ENCODE measurements at regions of chr7 and their contacts with region 1.

Region 1: DNA sequence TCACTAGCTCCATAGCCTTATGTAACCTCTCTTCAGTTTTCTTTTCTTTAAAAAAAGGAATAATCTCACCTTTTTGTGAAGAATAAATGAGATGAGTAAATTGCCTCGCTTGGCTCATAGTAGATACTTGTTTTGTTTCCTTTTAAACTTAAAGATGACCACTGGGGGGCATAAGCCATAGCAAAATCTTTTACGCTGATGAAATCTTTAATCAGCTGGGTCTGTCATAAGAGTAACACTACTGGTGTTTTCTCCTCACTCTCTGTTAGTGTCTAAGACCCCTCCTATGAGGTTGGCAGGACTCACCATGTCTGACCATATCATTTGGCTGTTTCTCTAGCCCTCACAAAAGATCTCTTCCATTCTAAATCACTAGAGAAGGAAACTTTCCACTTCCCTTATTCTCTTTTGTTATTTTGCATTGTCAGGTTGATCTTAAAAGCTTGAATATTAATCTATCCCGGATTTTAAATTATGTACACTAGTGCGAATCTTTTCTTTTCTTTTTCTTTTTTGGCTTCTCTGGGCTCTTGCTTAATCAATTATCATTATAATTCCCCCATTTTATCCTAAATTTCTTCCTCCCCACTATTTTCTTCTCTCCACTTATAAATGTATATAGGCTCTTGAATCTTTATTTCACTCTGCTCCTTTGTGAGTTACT is 12.5 kb downstream of the STAG3 start:
- DNase-seq: peak in 2 of 9 experiments; percentile 70 to 79
- ATAC-seq: peak; percentile 95
- H3K4me3 ChIP-seq: no peak overlapping the region
- H3K4me3 Mint-ChIP-seq: no peak overlapping the region
- H3K27ac ChIP-seq: no peak overlapping the region
- H3K27ac Mint-ChIP-seq: no peak overlapping the region
- H3K4me1 ChIP-seq: peaks cover 23% of the 10 kb centered on the region
- H3K4me1 Mint-ChIP-seq: peaks cover 36% of the 10 kb centered on the region
- H3K27me3 ChIP-seq: no peaks in the 10 kb centered on the region
- H3K27me3 Mint-ChIP-seq: no peaks in the 10 kb centered on the region
- CTCF ChIP-seq: peak; percentile 56

Region 2: GRCh38 chr7:100171087-100171681 is 19.0 kb before region 1 on chr7:
- CTCF ChIA-PET with region 1: interaction called, 25 read pairs
- POLR2A ChIA-PET with region 1: interaction called, 5 read pairs
- intact Hi-C with region 1: no loop called
- DNase-seq: peak in 6 of 9 experiments; percentile 38 to 69 (median 59)
- ATAC-seq: peak; percentile 44
- H3K4me3 ChIP-seq: peak overlapping the region; percentile 42 to 54
- H3K4me3 Mint-ChIP-seq: peak overlapping the region; percentile 82
- H3K27ac ChIP-seq: no peak overlapping the region
- H3K27ac Mint-ChIP-seq: peak overlapping the region; percentile 88
- H3K4me1 ChIP-seq: peaks cover 56% of the 10 kb centered on the region
- H3K4me1 Mint-ChIP-seq: peaks cover 67% of the 10 kb centered on the region
- H3K27me3 ChIP-seq: peaks cover 0 to 23% of the 10 kb centered on the region in 2 experiments
- H3K27me3 Mint-ChIP-seq: peaks cover 3% of the 10 kb centered on the region
- CTCF ChIP-seq: no peak

Region 3: DNA sequence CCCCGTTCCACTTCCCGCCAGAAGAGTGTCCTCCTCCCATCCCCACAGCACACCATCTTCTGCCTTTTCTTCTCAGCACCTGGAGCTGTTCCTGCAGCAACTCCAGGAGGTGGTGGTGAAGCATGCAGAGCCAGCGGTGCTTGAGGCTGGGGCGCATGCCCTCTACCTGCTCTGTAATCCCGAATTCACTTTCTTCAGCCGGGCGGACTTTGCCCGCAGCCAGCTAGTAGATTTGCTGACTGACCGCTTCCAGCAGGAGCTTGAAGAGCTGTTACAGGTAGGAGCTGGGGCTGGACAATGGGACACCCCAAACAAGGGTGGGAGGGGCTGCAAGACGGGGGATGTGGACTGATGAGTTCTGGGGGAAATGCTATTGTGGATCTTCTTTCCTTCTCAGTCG is 10.5 kb after region 1 on chr7:
- CTCF ChIA-PET with region 1: interaction called, 20 read pairs
- POLR2A ChIA-PET with region 1: no interaction called
- intact Hi-C with region 1: no loop called
- DNase-seq: no peak
- ATAC-seq: no peak
- H3K4me3 ChIP-seq: no peak overlapping the region
- H3K4me3 Mint-ChIP-seq: no peak overlapping the region
- H3K27ac ChIP-seq: no peak overlapping the region
- H3K27ac Mint-ChIP-seq: no peak overlapping the region
- H3K4me1 ChIP-seq: no peaks in the 10 kb centered on the region
- H3K4me1 Mint-ChIP-seq: no peaks in the 10 kb centered on the region
- H3K27me3 ChIP-seq: no peaks in the 10 kb centered on the region
- H3K27me3 Mint-ChIP-seq: no peaks in the 10 kb centered on the region
- CTCF ChIP-seq: no peak

Region 4: GRCh38 chr7:100215895-100216294 is 25.7 kb after region 1 on chr7:
- CTCF ChIA-PET with region 1: interaction called, 31 read pairs
- POLR2A ChIA-PET with region 1: interaction called, 3 read pairs
- intact Hi-C with region 1: loop called (anchors 1 kb)
- DNase-seq: no peak
- ATAC-seq: no peak
- H3K4me3 ChIP-seq: no peak overlapping the region
- H3K4me3 Mint-ChIP-seq: no peak overlapping the region
- H3K27ac ChIP-seq: no peak overlapping the region
- H3K27ac Mint-ChIP-seq: no peak overlapping the region
- H3K4me1 ChIP-seq: peaks cover 61% of the 10 kb centered on the region
- H3K4me1 Mint-ChIP-seq: peaks cover 58% of the 10 kb centered on the region
- H3K27me3 ChIP-seq: no peaks in the 10 kb centered on the region
- H3K27me3 Mint-ChIP-seq: no peaks in the 10 kb centered on the region
- CTCF ChIP-seq: no peak

Region 5: GRCh38 chr7:100407285-100408180 is 217.4 kb after region 1 on chr7:
- CTCF ChIA-PET with region 1: interaction called, 5 read pairs
- POLR2A ChIA-PET with region 1: no interaction called
- intact Hi-C with region 1: loop called in 1 of 2 experiments (anchors 1 kb)
- DNase-seq: peak in 6 of 9 experiments; percentile 9 to 84 (median 38)
- ATAC-seq: peak; percentile 99
- H3K4me3 ChIP-seq: no peak overlapping the region
- H3K4me3 Mint-ChIP-seq: no peak overlapping the region
- H3K27ac ChIP-seq: no peak overlapping the region
- H3K27ac Mint-ChIP-seq: no peak overlapping the region
- H3K4me1 ChIP-seq: no peaks in the 10 kb centered on the region
- H3K4me1 Mint-ChIP-seq: peaks cover 6% of the 10 kb centered on the region
- H3K27me3 ChIP-seq: no peaks in the 10 kb centered on the region
- H3K27me3 Mint-ChIP-seq: no peaks in the 10 kb centered on the region
- CTCF ChIP-seq: peak; percentile 77

Region 6: GRCh38 chr7:100538654-100539435 is 348.7 kb after region 1 on chr7 and contains the start of gene AGFG2:
- CTCF ChIA-PET with region 1: no interaction called
- POLR2A ChIA-PET with region 1: no interaction called
- intact Hi-C with region 1: no loop called
- DNase-seq: peak; percentile 100
- ATAC-seq: peak; percentile 94
- H3K4me3 ChIP-seq: peak within 1 kb of the TSS; percentile 67 to 74
- H3K4me3 Mint-ChIP-seq: peak within 1 kb of the TSS; percentile 99
- H3K27ac ChIP-seq: peak within 1 kb of the TSS; percentile 48 to 61
- H3K27ac Mint-ChIP-seq: peak within 1 kb of the TSS; percentile 84
- H3K4me1 ChIP-seq: peaks cover 40% of the 10 kb centered on the region
- H3K4me1 Mint-ChIP-seq: peaks cover 49% of the 10 kb centered on the region
- H3K27me3 ChIP-seq: no peaks in the 10 kb centered on the region
- H3K27me3 Mint-ChIP-seq: no peaks in the 10 kb centered on the region
- CTCF ChIP-seq: no peak
- total RNA-seq, gene AGFG2: 4.4 to 6.3 TPM

Measured in CD8-positive, alpha-beta T cell (primary cell).